Posterior vena cava (tissue), 2 donors: ENCODE measurements at regions of chr2 and their contacts with region 1.

Region 1: GRCh38 chr2:85288244-85288725 is 39.5 kb downstream of the TGOLN2 start:
- DNase-seq: no peak

Region 2: GRCh38 chr2:85066874-85067351 is 221.4 kb before region 1 on chr2:
- intact Hi-C with region 1: loop called in 1 of 2 experiments (anchors 5 kb)
- DNase-seq: peak; percentile 92

Region 3: GRCh38 chr2:85132834-85133637 is 155.2 kb before region 1 on chr2 and contains the start of gene TCF7L1:
- intact Hi-C with region 1: loop called in 1 of 2 experiments (anchors 5 kb)
- DNase-seq: peak; percentile 93
- total RNA-seq, gene TCF7L1: 23.1 to 25.9 TPM

Region 4: GRCh38 chr2:85266146-85267041 is 21.9 kb before region 1 on chr2:
- intact Hi-C with region 1: loop called in 1 of 2 experiments (anchors 2 kb)
- DNase-seq: peak; percentile 92

Region 5: GRCh38 chr2:85308896-85309555 is 20.7 kb after region 1 on chr2:
- intact Hi-C with region 1: no loop called
- DNase-seq: peak; percentile 89